ENCODE measurements at regions of chr6 and their contacts with region 1.

Region 1: DNA sequence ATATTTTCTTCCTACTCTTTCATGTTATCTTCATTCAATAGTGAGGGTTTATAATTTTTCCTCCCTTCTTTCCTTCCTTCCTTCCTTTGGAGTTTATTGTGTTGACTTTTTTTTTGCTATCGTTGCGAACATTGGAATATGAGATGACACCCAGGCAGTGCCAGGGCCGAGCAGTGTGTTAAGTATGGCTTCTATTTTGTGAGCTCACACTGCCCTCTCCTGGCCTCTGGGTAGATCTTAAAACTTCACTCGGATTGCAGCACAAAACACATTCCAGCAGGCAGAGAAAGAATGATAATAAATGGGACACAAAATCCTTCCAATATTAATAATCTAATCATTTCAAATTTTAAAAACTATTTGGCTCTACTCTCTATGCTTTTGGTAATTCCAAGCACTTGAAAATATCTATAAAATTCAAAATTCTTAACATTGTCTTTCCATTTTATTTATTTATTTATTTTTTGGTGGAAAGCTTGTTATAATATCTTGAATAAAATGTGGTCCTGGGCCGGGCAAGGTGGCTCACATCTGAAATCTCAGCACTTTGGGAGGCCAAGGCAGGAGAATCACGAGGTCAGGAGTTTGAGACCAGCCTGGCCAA is 147.4 kb upstream of the OLIG3 start:
- DNase-seq: peak; percentile 70
- H3K4me3 ChIP-seq: no peak overlapping the region
- H3K27ac ChIP-seq: no peak overlapping the region
- H3K4me1 ChIP-seq: no peaks in the 10 kb centered on the region
- H3K27me3 ChIP-seq: peaks cover 0 to 3% of the 10 kb centered on the region in 2 experiments
- CTCF ChIP-seq: peak; percentile 55 to 58
- POLR2A ChIP-seq: no peak

Region 2: DNA sequence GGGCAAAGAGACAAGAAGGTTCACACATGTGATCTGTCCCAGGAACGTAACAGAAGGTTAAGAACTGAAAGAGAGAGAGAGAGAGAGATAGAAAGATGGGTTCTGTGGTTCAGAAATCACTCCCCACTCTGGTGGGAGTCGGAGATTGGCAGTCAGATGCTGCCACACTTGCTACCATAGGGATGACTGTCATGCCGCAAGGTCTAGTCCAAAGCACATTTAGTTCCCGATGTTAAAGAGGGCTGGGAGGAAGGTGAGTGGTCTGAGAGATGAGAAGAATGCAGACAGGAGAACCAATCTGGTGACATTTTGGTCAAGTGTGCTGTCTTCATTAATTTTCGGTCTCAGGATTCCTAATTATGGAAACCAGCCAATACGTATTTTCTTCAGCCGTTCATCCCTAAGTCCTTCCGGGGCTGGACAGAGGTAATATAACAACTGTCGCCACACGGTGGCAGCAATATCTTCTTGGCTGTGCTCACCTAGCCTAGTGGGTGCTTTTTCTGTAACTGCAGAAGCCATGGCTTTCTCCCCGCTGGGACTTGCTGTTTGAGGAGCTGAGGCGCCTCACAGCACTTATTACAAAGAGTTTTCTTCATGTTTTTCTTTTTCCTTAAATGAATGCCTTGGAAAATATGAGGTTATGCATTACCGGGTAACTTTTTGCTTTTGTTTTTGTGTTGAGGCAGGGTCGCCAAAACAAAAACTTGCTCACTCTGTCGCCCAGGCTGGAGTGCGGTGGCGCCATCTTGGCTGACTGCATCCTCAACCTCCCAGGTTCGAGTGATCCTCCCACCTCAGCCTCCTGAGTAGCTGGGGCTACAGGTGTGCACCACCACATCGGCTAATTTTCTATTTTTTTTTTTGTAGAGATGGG is 673.5 kb before region 1 on chr6:
- CTCF ChIA-PET with region 1: interaction called, 7 read pairs
- POLR2A ChIA-PET with region 1: no interaction called
- dilution Hi-C with region 1: no loop called
- intact Hi-C with region 1: loop called (anchors 1 kb)
- DNase-seq: peak; percentile 65
- H3K4me3 ChIP-seq: no peak overlapping the region
- H3K27ac ChIP-seq: no peak overlapping the region
- H3K4me1 ChIP-seq: no peaks in the 10 kb centered on the region
- H3K27me3 ChIP-seq: peaks cover 0 to 10% of the 10 kb centered on the region in 2 experiments
- CTCF ChIP-seq: peak; percentile 55 to 57
- POLR2A ChIP-seq: no peak

Region 3: GRCh38 chr6:137076277-137077068 is 565.1 kb before region 1 on chr6:
- CTCF ChIA-PET with region 1: interaction called, 23 read pairs
- POLR2A ChIA-PET with region 1: no interaction called
- dilution Hi-C with region 1: no loop called
- intact Hi-C with region 1: loop called (anchors 1 kb)
- DNase-seq: peak; percentile 60
- H3K4me3 ChIP-seq: no peak overlapping the region
- H3K27ac ChIP-seq: no peak overlapping the region
- H3K4me1 ChIP-seq: no peaks in the 10 kb centered on the region
- H3K27me3 ChIP-seq: peaks cover 2% of the 10 kb centered on the region in 2 experiments
- CTCF ChIP-seq: peak; percentile 67 to 76
- POLR2A ChIP-seq: no peak

Region 4: DNA sequence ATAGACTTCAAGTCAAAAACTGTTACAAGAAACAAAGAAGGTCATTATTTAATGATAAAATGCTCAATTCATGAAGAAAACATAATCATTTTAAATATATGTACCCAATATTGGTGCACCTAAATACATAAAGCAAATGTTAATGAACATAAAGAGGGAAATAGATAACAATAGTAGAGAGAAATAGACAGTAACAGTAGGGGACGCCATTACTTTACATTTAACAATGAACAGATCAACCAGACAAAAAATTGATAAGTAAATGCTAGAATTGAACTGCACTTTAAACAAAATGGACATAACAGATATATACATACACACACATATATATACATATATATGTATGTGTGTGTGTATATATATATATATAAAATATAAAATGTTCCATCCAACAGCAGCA is 505.5 kb before region 1 on chr6:
- CTCF ChIA-PET with region 1: interaction called, 3 read pairs
- POLR2A ChIA-PET with region 1: no interaction called
- dilution Hi-C with region 1: no loop called
- intact Hi-C with region 1: loop called (anchors 2 kb)
- DNase-seq: peak; percentile 48
- H3K4me3 ChIP-seq: no peak overlapping the region
- H3K27ac ChIP-seq: no peak overlapping the region
- H3K4me1 ChIP-seq: no peaks in the 10 kb centered on the region
- H3K27me3 ChIP-seq: peaks cover 0 to 3% of the 10 kb centered on the region in 2 experiments
- CTCF ChIP-seq: peak in 1 of 2 donors; percentile 16
- POLR2A ChIP-seq: no peak

Region 5: GRCh38 chr6:137475103-137475502 is 166.5 kb before region 1 on chr6:
- CTCF ChIA-PET with region 1: no interaction called
- POLR2A ChIA-PET with region 1: no interaction called
- dilution Hi-C with region 1: no loop called
- intact Hi-C with region 1: loop called (anchors 2 kb)
- DNase-seq: no peak
- H3K4me3 ChIP-seq: no peak overlapping the region
- H3K27ac ChIP-seq: no peak overlapping the region
- H3K4me1 ChIP-seq: no peaks in the 10 kb centered on the region
- H3K27me3 ChIP-seq: peaks cover 11 to 13% of the 10 kb centered on the region in 2 experiments
- CTCF ChIP-seq: no peak
- POLR2A ChIP-seq: no peak